IMR-90 (cell line): ENCODE measurements at regions of chr14 and their contacts with region 1.

Region 1: GRCh38 chr14:62807636-62808035 is 237.6 kb downstream of the KCNH5 start:
- DNase-seq: no peak
- ATAC-seq: no peak
- H3K4me3 ChIP-seq: no peak overlapping the region
- H3K27ac ChIP-seq: no peak overlapping the region
- H3K4me1 ChIP-seq: no peaks in the 10 kb centered on the region
- H3K27me3 ChIP-seq: no peaks in the 10 kb centered on the region
- CTCF ChIP-seq: no peak
- POLR2A ChIP-seq: no peak
- RAD21 ChIP-seq: no peak

Region 2: DNA sequence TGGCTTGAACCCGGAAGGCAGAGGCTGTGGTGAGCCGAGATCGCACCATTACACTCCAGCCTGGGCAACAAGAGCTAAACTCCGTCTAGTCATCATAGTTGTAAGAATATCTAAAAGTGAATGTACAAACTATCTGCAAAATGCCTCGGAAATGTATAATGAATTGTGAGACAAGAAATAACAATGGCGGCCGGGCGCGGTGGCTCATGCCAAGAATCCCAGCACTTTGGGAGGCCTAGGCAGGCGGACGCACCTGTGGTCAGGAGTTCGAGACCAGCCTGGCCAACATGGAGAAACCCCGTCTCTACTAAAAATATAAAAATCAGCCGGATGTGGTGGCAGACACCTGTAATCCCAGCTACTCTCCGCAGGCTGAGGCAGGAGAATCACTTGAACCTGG is 725.8 kb after region 1 on chr14:
- CTCF ChIA-PET with region 1: no interaction called
- POLR2A ChIA-PET with region 1: no interaction called
- dilution Hi-C with region 1: no loop called
- in situ Hi-C with region 1: no loop called
- intact Hi-C with region 1: loop called (anchors 5 kb)
- DNase-seq: no peak
- ATAC-seq: no peak
- H3K4me3 ChIP-seq: no peak overlapping the region
- H3K27ac ChIP-seq: no peak overlapping the region
- H3K4me1 ChIP-seq: no peaks in the 10 kb centered on the region
- H3K27me3 ChIP-seq: no peaks in the 10 kb centered on the region
- CTCF ChIP-seq: no peak
- POLR2A ChIP-seq: no peak
- RAD21 ChIP-seq: no peak